ENCODE measurements at regions of chr1 and their contacts with region 1.

Region 1: DNA sequence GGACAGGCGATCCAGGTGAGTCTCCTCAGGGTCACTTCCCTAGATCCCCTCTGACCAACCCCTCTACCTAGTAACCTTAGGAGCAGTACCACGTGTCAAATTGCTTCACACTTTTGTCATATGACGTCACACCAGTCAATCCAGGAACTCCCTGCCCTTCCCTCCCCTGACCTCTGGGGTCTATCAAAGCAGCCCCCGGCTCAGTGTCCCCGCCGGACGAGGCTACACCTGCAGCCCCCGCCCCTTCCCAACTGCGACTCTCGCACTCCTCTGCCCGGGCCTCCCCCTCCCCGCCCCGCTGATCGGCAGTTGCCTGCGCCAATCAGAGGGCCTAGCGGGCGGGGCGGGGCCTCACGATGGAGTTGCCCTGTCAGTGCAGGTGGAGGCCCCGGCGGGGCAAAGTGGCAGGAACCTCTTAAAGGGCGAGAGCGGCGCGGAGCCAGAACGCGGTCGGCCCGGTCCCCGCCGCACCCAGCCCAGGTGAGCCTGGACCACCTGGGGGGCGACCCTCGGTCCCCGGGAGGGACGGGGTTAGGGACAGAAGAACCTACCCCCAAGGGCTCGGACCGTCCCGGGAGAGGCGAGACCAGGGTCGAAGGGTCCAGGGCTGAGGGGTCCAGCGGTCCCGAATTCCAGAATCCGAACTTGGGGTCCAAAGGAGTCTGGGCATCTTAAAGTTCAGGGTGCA is 27.5 kb upstream of the EPB41 start:
- DNase-seq: no peak
- H3K4me3 ChIP-seq: peak overlapping the region; percentile 82
- H3K27me3 ChIP-seq: no peaks in the 10 kb centered on the region
- CTCF ChIP-seq: no peak

Region 2: DNA sequence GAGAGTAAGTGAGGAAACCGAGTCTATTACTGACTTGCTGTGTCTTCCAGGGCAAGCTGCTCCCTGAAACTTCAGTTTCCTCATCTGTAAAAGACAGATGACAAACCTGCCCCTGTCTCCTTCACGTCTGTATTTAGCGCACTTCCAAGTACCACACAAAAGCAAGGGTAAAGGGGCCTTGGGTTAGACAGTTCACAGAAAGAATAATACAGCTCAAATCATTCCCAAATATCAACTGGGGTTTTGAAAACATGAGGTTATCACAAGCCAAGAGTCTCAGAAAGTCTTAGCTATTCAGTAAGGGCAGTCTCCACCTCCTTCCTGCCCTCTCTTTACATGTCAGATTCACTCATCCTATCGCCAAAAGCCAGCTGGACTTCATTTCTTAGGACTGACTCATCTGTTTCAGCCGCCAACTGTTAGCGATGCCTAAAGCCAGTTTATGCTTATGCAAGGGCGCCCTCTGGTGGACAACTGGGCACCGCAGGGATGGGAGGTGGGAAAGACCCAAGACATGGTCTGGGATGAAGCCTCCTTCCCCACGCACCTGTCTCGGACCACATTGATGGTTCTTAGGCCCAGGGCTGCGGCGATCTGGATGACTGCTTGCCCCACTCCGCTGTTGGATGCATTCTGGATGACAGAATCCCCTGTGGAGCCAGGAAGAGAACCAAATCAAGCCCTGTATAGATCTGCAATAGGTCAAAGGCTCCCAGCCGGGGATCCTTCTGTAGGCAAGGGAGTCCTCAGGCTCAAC is 315.9 kb after region 1 on chr1:
- CTCF ChIA-PET with region 1: interaction called, 203 read pairs
- POLR2A ChIA-PET with region 1: no interaction called
- DNase-seq: peak; percentile 88
- H3K4me3 ChIP-seq: no peak overlapping the region
- H3K27me3 ChIP-seq: no peaks in the 10 kb centered on the region
- CTCF ChIP-seq: peak; percentile 96

Region 3: GRCh38 chr1:29209173-29209572 is 322.3 kb after region 1 on chr1:
- CTCF ChIA-PET with region 1: interaction called, 203 read pairs
- POLR2A ChIA-PET with region 1: interaction called, 3 read pairs
- DNase-seq: no peak
- H3K4me3 ChIP-seq: no peak overlapping the region
- H3K27me3 ChIP-seq: no peaks in the 10 kb centered on the region
- CTCF ChIP-seq: no peak

Measured in BJ (cell line).